CD4-positive, alpha-beta memory T cell (primary cell): ENCODE measurements at regions of chr11 and their contacts with region 1.

Region 1: DNA sequence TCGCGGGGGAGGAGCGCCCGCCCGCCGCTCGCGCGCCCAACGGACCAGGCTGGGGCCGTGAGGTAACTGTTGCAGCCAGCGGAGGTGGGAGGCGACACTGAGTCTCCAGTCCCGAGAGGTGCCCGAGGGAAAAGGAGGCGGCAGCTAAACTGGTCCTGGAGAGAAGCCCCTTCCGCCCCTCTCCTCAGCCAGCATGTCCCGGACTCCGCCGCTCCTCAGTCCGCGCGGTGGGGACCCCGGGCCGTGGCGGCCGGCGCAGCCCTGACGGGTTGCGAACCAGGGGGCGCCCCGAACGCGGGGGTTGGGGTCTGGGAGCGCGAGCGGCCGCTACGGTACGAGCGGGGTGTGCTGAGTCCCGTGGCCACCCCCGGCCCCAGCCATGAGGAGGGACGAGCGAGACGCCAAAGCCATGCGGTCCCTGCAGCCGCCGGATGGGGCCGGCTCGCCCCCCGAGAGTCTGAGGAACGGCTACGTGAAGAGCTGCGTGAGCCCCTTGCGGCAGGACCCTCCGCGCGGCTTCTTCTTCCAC is at the start of gene PDE3B:
- DNase-seq: peak; percentile 65 to 71 (median 65)
- H3K4me3 ChIP-seq: peak within 1 kb of the TSS; percentile 89 to 95
- H3K4me3 Mint-ChIP-seq: peak within 1 kb of the TSS; percentile 91 to 97 (median 95)
- H3K27ac ChIP-seq: peak within 1 kb of the TSS; percentile 68
- H3K27ac Mint-ChIP-seq: peak within 1 kb of the TSS; percentile 79 to 94 (median 91)
- H3K4me1 ChIP-seq: peaks cover 65% of the 10 kb centered on the region
- H3K4me1 Mint-ChIP-seq: peaks cover 43 to 65% (median 54%) of the 10 kb centered on the region in 4 donors
- H3K27me3 ChIP-seq: no peaks in the 10 kb centered on the region
- H3K27me3 Mint-ChIP-seq: peaks cover 0 to 2% of the 10 kb centered on the region in 2 donors
- total RNA-seq, gene PDE3B: 219 to 222 TPM

Region 2: GRCh38 chr11:14537134-14537599 is 106.6 kb before region 1 on chr11:
- CTCF ChIA-PET with region 1: interaction called, 36 read pairs
- POLR2A ChIA-PET with region 1: interaction called, 29 read pairs
- intact Hi-C with region 1: loop called (anchors 1 kb)
- DNase-seq: peak; percentile 49 to 69 (median 65)
- H3K4me3 ChIP-seq: peak overlapping the region in 1 of 2 donors; percentile 23
- H3K4me3 Mint-ChIP-seq: peak overlapping the region; percentile 69 to 90 (median 82)
- H3K27ac ChIP-seq: peak overlapping the region; percentile 48
- H3K27ac Mint-ChIP-seq: peak overlapping the region; percentile 77 to 97 (median 92)
- H3K4me1 ChIP-seq: peaks cover 5% of the 10 kb centered on the region
- H3K4me1 Mint-ChIP-seq: peaks cover 3 to 14% (median 4%) of the 10 kb centered on the region in 4 donors
- H3K27me3 ChIP-seq: no peaks in the 10 kb centered on the region
- H3K27me3 Mint-ChIP-seq: no peaks in the 10 kb centered on the region

Region 3: GRCh38 chr11:14566331-14567063 is 77.3 kb before region 1 on chr11:
- CTCF ChIA-PET with region 1: interaction called, 4 read pairs
- POLR2A ChIA-PET with region 1: interaction called, 26 read pairs
- intact Hi-C with region 1: no loop called
- DNase-seq: no peak
- H3K4me3 ChIP-seq: no peak overlapping the region
- H3K4me3 Mint-ChIP-seq: peak overlapping the region in 3 of 8 donors; percentile 5 to 56 (median 8)
- H3K27ac ChIP-seq: no peak overlapping the region
- H3K27ac Mint-ChIP-seq: peak overlapping the region in 6 of 7 donors; percentile 37 to 89 (median 66)
- H3K4me1 ChIP-seq: peaks cover 54% of the 10 kb centered on the region
- H3K4me1 Mint-ChIP-seq: peaks cover 40 to 72% (median 56%) of the 10 kb centered on the region in 4 donors
- H3K27me3 ChIP-seq: no peaks in the 10 kb centered on the region
- H3K27me3 Mint-ChIP-seq: no peaks in the 10 kb centered on the region

Region 4: DNA sequence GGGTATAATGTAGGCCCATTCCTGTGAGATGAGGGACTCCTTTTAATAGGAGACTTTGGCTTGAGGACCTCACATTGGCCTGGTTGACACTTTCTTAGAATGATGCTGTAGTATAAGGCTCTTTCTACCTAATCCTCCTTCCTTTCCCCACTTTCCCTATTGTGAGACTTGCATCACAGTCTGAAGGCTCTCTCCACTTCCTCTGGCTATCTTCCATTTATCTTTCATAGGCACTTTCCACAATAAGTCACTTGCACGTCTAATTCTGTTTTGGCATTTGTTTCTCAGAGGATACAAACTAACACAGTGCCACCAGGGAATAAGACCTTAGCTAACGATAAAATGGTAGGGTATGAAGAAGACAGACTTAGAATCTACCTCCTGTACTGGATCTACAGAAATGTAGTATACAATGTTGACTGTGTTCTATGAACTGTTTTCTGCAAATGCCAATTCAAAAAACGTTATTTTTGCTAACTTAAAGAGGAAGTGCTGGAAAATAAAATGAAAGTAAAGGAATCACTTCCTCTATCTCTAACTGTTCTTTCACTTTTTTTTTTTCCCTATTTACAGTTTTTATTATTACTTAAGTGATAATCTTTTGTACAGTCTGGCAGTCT is 18.1 kb before region 1 on chr11:
- CTCF ChIA-PET with region 1: interaction called, 52 read pairs
- POLR2A ChIA-PET with region 1: interaction called, 52 read pairs
- intact Hi-C with region 1: no loop called
- DNase-seq: no peak
- H3K4me3 ChIP-seq: no peak overlapping the region
- H3K4me3 Mint-ChIP-seq: peak overlapping the region in 4 of 8 donors; percentile 40 to 59 (median 52)
- H3K27ac ChIP-seq: no peak overlapping the region
- H3K27ac Mint-ChIP-seq: peak overlapping the region in 4 of 7 donors; percentile 11 to 62 (median 51)
- H3K4me1 ChIP-seq: peaks cover 33% of the 10 kb centered on the region
- H3K4me1 Mint-ChIP-seq: peaks cover 34 to 64% (median 49%) of the 10 kb centered on the region in 4 donors
- H3K27me3 ChIP-seq: no peaks in the 10 kb centered on the region
- H3K27me3 Mint-ChIP-seq: no peaks in the 10 kb centered on the region

Region 5: GRCh38 chr11:14764579-14765527 is 121.1 kb after region 1 on chr11:
- CTCF ChIA-PET with region 1: interaction called, 14 read pairs
- POLR2A ChIA-PET with region 1: interaction called, 52 read pairs
- intact Hi-C with region 1: loop called (anchors 1 kb)
- DNase-seq: peak; percentile 81 to 93 (median 90)
- H3K4me3 ChIP-seq: no peak overlapping the region
- H3K4me3 Mint-ChIP-seq: peak overlapping the region in 7 of 8 donors; percentile 44 to 81 (median 67)
- H3K27ac ChIP-seq: peak overlapping the region; percentile 53
- H3K27ac Mint-ChIP-seq: no peak overlapping the region
- H3K4me1 ChIP-seq: peaks cover 89% of the 10 kb centered on the region
- H3K4me1 Mint-ChIP-seq: peaks cover 18 to 40% (median 25%) of the 10 kb centered on the region in 4 donors
- H3K27me3 ChIP-seq: no peaks in the 10 kb centered on the region
- H3K27me3 Mint-ChIP-seq: no peaks in the 10 kb centered on the region